Posterior vena cava (tissue), 2 donors: ENCODE measurements at regions of chr20 and their contacts with region 1.

Region 1: GRCh38 chr20:44683263-44684046 is 31.7 kb upstream of the CCN5 start:
- DNase-seq: no peak

Region 2: GRCh38 chr20:44733341-44734069 is 50.0 kb after region 1 on chr20:
- intact Hi-C with region 1: loop called (anchors 2 kb)
- DNase-seq: peak; percentile 89

Region 3: DNA sequence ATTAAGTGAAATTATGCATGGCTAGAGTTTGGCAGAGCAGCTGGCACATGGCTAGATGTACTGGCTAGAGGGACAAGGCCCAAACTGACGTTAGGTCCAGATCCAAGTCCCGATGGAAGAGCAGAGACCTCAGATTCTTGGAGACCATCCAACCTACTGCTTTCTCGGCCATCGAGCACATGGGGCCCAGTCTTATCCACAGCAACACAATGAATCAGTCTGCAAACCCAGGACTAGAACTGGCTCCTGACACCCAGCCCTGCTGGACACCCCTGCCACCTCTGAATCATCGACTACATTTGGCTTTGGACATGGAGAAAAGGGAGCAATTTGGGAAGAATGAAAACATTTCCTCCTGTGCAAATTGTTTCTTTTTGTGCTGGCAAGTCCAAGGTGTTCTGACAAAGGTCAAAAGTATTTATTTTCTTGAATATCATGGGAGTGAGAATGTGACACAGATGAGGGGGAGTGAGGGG is 178.1 kb after region 1 on chr20:
- intact Hi-C with region 1: loop called in 1 of 2 experiments (anchors 10 kb)
- DNase-seq: peak; percentile 84

Region 4: GRCh38 chr20:45545754-45546453 is 862.4 kb after region 1 on chr20:
- intact Hi-C with region 1: no loop called
- DNase-seq: no peak

Region 5: DNA sequence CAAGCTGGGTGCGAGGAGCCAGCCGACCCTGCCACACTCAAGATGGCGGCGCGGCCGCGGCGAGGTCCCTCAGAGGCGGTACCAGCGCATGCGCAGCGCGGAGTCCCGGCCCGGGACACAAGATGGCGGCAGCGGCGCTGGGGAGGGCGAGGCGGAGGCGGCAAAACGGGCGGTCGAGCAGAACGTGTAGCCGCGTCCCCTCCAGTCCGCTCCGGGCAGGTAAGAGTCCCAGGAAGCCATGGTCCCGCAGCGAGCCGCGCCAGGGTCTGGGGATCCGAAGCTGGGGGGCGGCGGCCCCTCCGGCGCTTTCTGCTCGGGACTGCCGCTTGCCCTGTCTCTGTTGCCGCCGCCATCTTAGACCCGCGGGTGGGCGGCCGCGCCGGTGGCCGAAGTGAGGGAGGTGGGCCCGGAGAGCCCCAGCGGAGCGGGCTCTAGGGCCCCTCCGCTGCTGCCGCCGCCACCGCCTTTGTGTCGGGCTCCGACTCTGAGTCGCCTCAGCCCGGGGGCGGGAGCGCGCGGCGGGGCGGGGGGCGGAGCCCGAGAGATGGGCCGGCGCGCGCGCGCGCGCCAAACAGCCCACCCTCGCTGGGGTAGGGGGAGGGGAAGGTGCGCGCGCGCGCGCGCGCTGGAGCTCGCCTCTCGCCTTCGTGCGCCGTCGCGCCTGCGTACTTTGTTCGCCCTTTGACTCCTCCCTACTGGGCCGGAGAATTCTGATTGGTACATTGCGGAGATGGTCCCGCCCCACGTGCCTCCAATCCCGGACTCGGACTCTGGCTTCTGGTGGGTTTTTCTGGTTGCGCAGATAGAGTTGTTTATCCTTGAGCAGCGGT is 1251.3 kb after region 1 on chr20 and contains the start of gene PCIF1:
- intact Hi-C with region 1: no loop called
- DNase-seq: peak; percentile 99
- total RNA-seq, gene PCIF1: 27.3 to 35.7 TPM